GM10248 (cell line): ENCODE measurements at regions of chr17 and their contacts with region 1.

Region 1: DNA sequence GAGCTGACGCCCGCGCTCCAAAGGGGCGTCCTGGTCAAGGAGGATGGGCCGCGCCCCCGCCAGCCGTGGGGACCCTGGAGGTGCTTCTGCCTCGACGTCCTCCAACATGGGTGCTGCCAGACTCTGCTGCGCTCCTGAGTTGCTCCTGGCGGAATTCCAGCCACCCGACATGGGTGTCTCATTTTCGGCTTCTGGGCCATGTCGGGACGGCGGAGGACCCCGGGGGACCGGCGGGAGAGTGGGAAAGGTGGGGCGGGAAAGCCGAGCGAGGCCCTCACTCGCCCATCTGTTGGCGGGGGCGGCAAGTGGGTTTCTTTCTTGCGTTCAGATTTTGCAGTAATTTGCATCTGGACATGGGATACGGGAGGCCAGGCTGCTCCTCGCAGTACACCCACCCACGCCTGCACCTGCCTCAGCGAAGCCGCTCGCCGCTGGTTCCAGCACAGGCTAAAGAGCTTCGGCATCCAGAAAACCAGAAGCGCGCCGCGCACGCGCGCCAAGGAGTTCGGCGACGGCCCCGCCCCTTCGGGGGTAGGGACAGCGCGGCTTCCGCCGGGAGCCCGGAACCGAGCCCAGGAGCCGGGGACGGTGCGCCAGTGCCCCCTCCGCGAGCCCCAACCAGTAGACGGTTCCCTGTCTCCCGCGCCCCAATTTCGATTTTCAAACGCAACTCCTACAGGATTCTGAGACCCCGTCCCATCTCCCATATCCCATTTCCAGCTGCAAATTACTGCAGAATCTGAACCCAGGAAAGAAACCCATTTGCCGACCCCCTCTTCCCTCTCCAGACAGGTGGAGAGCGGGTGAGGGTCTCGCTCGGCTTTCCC is at the start of gene ARMC7:
- DNase-seq: peak; percentile 97
- CTCF ChIP-seq: no peak

Region 2: DNA sequence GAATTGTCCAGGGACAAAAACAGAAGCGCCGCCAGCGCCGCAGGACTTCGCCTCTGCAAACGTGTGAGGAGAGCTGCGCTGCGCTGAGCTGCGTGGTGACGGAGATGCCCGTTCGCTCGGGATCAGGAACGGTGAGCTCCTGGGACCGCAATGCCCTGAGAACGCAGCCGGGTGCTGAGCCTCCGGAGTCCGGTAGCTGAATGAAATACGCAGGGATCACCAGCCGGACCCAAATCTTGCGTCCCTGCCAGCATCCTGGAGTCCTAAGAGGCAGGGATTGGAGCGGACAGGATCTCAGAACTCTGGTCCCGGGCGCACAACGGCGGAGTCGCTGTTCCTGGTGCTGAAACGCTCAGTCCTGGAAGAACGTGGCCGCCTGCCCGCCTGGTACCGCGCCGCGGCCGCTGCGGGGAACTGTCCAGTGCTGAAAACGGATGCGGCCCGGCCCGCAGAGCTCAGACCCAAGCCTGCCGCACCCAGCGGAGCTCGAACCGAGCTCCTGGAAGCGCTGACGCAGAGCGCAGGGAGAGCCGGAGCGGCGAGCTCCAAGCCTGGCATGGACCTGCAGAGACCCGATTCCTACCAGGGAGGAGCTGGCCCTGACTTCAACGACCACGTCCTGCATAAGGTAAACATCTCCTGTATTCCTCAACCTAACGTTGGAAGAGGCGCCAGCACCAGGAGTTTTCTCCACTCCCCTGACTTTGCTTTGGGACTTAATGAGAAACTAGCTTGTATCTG is 438.4 kb before region 1 on chr17:
- CTCF ChIA-PET with region 1: no interaction called
- POLR2A ChIA-PET with region 1: no interaction called
- DNase-seq: peak; percentile 63
- CTCF ChIP-seq: no peak

Region 3: DNA sequence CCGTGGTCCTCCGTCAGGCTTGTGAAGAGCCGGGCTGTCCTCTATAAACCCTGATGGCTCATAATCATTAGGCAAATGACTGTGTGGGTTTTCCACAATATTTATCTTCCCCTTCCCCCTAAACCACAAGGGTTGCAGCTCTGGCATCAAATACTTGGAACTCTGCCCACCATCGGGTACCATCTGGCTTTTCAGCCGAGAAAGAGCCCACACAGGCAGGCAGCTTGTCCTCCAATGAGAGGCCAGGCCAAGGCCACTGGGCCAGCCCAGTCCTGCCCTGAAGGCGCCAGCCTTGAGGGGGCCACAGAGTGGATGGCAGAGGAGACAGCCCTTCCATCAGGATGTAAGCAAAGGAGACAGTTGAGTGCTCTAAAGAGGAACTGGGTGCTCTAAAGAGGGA is 301.7 kb before region 1 on chr17:
- CTCF ChIA-PET with region 1: no interaction called
- POLR2A ChIA-PET with region 1: no interaction called
- DNase-seq: no peak
- CTCF ChIP-seq: no peak

Region 4: DNA sequence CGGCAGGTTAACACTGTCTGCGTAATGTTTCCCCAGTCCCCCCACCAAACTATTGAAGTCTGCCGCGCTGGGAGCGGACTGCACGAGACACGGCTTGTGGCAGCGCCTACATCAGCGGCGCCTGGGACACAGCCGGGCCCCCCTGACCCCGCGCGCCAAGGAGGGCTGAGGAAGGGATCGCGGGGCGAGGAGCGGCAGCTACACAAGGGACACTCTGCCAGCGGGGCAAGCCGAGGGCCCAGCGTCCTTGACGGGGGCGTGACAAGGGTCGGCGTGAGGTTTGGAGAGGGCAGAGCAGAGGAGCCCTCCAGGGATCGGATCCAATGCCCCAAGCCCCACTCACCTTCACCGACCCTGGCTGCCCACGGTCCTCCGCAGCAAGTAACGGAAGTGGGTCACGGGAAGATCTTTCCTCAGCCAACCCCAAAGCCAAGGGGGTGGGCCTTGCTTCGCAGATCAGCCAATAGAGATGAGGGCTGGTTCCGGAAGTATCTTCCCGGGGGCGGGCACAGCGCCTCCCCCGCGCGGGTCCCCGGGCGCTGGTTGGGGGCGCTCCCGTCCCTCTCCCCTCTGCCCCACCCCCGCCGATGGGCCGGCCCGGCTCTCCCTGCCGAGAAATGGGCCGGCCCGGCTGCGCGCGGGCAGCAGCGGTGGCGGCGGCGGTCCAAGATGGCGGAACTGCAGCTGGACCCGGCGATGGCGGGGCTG is 62.9 kb before region 1 on chr17 and contains the starts of genes ATP5PD and KCTD2:
- CTCF ChIA-PET with region 1: interaction called, 12 read pairs
- POLR2A ChIA-PET with region 1: no interaction called
- DNase-seq: peak; percentile 99
- CTCF ChIP-seq: no peak

Region 5: GRCh38 chr17:75077496-75078283 is 31.9 kb before region 1 on chr17:
- CTCF ChIA-PET with region 1: interaction called, 23 read pairs
- POLR2A ChIA-PET with region 1: interaction called, 4 read pairs
- DNase-seq: peak; percentile 75
- CTCF ChIP-seq: peak; percentile 40

Region 6: DNA sequence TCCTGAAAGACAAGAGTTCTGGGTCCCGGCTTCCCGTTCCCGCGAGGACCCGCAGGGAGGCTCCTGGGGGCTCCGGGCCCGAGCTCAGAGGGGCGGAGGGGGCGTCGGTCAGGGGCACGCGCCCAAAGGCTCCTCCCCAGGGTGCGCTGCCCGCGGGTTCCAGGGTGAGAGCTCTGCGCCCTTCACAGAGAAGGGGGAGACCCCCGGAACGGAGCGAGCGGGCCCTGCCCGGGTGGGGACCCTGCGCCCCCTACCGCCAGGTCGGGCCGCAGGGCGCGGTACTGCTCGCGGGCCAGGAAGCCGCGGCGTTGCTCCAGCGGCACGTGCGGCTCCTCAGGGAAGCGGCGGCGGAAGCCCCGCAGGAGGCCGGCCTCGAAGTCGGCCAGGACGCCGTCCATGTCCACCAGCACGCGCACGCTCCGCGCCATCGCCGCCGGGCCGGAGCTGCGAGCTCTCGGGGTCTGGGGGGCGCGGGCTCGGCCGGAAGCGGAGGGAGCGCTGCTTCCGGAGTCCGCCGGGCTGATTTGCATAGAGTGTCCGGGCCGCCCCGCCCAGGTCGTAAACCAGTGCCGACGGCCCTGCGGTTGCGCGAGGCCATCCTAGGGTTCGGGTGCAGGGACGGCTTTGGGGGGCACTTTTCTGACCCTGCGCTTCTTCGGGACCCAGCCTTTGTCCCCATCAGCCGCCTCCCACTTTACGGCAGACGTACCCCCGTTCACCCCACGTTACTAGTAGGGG is 21.8 kb after region 1 on chr17 and contains the start of gene NT5C:
- CTCF ChIA-PET with region 1: interaction called, 338 read pairs
- POLR2A ChIA-PET with region 1: interaction called, 5 read pairs
- DNase-seq: peak; percentile 92
- CTCF ChIP-seq: peak; percentile 73

Region 7: DNA sequence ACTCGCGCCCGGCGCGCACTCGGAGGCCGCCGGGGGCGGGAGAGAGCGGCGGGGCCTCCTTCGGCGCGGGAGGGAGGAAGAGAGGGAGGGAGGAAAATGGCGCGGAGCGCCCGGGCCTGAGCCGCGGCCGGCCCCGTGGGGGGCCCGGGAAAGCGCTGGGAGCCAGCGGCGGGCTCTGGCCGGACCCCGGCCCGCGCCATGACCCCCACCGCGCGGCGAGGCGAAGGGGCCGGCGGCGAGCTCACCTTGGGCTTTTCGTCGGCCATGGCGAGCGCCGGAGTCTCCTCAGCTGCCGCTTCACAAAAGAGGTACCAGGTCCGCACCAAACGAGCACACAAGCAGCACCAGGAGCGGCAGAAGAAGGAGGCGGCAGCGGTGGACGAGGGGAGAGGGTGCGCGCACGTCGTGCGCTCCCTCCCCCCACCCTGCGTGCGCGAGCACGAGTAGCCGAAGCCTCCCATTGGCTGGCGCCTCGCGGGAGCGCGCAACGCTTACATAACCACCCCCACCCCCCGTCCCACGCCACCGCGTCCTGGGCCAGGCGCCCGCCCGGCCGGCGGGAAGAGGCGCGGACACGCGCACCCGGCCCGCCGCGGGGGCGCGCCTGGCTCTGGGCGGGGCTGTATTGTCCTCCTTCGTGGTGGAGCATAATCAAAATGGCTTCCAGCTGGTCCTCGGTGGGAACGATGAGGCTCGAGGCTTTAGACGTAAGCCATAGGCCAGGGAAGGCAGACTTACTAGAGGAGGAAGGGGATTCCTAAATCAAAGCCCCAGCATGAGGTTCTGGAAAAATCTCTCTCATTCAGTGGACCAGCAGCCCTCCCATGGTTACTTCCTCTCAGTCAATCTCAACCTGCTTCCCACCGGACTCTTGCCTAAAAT is 73.2 kb after region 1 on chr17 and contains the start of gene SUMO2:
- CTCF ChIA-PET with region 1: interaction called, 18 read pairs
- POLR2A ChIA-PET with region 1: interaction called, 4 read pairs
- DNase-seq: peak; percentile 99
- CTCF ChIP-seq: no peak

Region 8: GRCh38 chr17:75238684-75239191 is 129.1 kb after region 1 on chr17:
- CTCF ChIA-PET with region 1: interaction called, 12 read pairs
- POLR2A ChIA-PET with region 1: interaction called, 3 read pairs
- DNase-seq: peak; percentile 82
- CTCF ChIP-seq: peak; percentile 84

Region 9: GRCh38 chr17:75652915-75653549 is 543.4 kb after region 1 on chr17:
- CTCF ChIA-PET with region 1: no interaction called
- POLR2A ChIA-PET with region 1: no interaction called
- DNase-seq: peak; percentile 58
- CTCF ChIP-seq: peak; percentile 69